ENCODE measurements at regions of chr2 and their contacts with region 1.

Region 1: DNA sequence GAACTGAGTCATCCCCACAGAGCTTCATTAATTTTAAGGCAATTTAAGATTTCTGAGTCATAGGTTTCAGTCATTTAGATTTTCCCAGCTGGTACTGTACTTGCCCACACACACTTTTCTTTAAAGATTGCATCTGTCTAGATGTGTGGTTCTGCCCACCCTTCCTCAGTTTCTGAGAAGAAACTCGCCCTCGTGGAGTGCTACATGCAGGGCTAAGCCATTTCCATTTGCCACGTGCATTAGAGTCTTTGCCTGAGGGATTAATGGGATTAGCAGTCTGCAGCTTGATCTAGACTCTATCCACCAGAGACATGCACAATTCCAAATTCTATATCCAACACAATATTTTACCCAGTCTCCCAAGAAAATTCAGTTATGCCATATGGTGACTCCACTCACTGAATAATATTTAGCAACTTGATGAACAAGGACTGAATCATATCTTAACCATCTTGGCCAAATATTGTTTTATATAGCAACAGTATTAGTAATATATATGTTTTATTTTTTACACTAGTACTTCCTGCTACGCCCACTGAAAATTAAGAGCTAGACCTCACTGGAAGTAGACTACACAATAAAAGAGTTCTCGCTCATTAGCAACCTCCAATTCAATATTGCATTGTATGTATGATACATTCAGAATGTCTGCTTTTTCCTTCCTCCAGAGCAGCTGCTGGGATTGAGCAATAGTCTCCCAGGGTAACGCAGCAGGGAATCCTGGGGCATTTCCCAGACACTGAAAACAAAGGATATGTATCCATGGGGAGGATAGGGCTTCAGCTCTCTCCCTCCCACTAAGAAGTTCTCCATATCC is 14.2 kb upstream of the TRIB2 start:
- DNase-seq: no peak
- ATAC-seq: 0 out of 6 replicates have a peak, but pooled peaks of 1 of the 2 experiments have one; percentile 38
- H3K4me3 ChIP-seq: no peak overlapping the region
- H3K27ac ChIP-seq: no peak overlapping the region
- H3K4me1 ChIP-seq: no peaks in the 10 kb centered on the region
- CTCF ChIP-seq: no peak
- EP300 ChIP-seq: no peak
- POLR2A ChIP-seq: no peak
- RAD21 ChIP-seq: no peak

Region 2: GRCh38 chr2:12716282-12717190 is 14.0 kb after region 1 on chr2 and contains the start of gene TRIB2:
- CTCF ChIA-PET with region 1: interaction called, 31 read pairs
- POLR2A ChIA-PET with region 1: interaction called, 4 read pairs
- DNase-seq: peak; percentile 41 to 63
- ATAC-seq: peak; percentile 71 to 81
- H3K4me3 ChIP-seq: peak within 1 kb of the TSS; percentile 64
- H3K27ac ChIP-seq: peak within 1 kb of the TSS in 1 of 2 experiments; percentile 69; a peak in 4 of 6 replicates
- H3K4me1 ChIP-seq: peaks cover 15% of the 10 kb centered on the region
- CTCF ChIP-seq: no peak
- EP300 ChIP-seq: no peak
- POLR2A ChIP-seq: no peak
- RAD21 ChIP-seq: no peak
- polyA plus RNA-seq, gene TRIB2: 0.17 and 0.28 TPM in 2 replicates

Measured in A549 (cell line).